CD8-positive, alpha-beta T cell (primary cell): ENCODE measurements at regions of chr6 and their contacts with region 1.

Region 1: GRCh38 chr6:33620856-33621710 is at the start of gene ITPR3:
- DNase-seq: peak; percentile 55 to 92 (median 72)
- ATAC-seq: peak; percentile 84
- H3K4me3 ChIP-seq: peak within 1 kb of the TSS; percentile 79 to 95
- H3K4me3 Mint-ChIP-seq: peak within 1 kb of the TSS; percentile 90
- H3K27ac ChIP-seq: peak within 1 kb of the TSS; percentile 78 to 86
- H3K27ac Mint-ChIP-seq: peak within 1 kb of the TSS; percentile 91
- H3K4me1 ChIP-seq: peaks cover 38% of the 10 kb centered on the region
- H3K4me1 Mint-ChIP-seq: peaks cover 66% of the 10 kb centered on the region
- H3K27me3 ChIP-seq: no peaks in the 10 kb centered on the region
- H3K27me3 Mint-ChIP-seq: no peaks in the 10 kb centered on the region
- CTCF ChIP-seq: no peak
- total RNA-seq, gene ITPR3: 39.5 to 40.1 TPM

Region 2: GRCh38 chr6:32853541-32854375 is 767.3 kb before region 1 on chr6 and contains the starts of genes PSMB9 and TAP1:
- CTCF ChIA-PET with region 1: no interaction called
- POLR2A ChIA-PET with region 1: no interaction called
- intact Hi-C with region 1: loop called in 1 of 2 experiments (anchors 5 kb)
- DNase-seq: peak; percentile 83 to 99 (median 94)
- ATAC-seq: peak; percentile 78
- H3K4me3 ChIP-seq: peak within 1 kb of the TSS; percentile 85 to 99
- H3K4me3 Mint-ChIP-seq: peak within 1 kb of the TSS; percentile 99
- H3K27ac ChIP-seq: peak within 1 kb of the TSS; percentile 98
- H3K27ac Mint-ChIP-seq: peak within 1 kb of the TSS; percentile 100
- H3K4me1 ChIP-seq: peaks cover 62% of the 10 kb centered on the region
- H3K4me1 Mint-ChIP-seq: peaks cover 69% of the 10 kb centered on the region
- H3K27me3 ChIP-seq: no peaks in the 10 kb centered on the region
- H3K27me3 Mint-ChIP-seq: no peaks in the 10 kb centered on the region
- CTCF ChIP-seq: peak; percentile 89
- total RNA-seq, gene PSMB9: 32.9 to 34.7 TPM
- total RNA-seq, gene TAP1: 98.0 to 98.1 TPM

Region 3: GRCh38 chr6:33192671-33193602 is 428.1 kb before region 1 on chr6:
- CTCF ChIA-PET with region 1: no interaction called
- POLR2A ChIA-PET with region 1: no interaction called
- intact Hi-C with region 1: no loop called
- DNase-seq: peak in 5 of 9 experiments; percentile 41 to 60 (median 49)
- ATAC-seq: peak; percentile 29
- H3K4me3 ChIP-seq: peak overlapping the region; percentile 39 to 77
- H3K4me3 Mint-ChIP-seq: peak overlapping the region; percentile 83
- H3K27ac ChIP-seq: no peak overlapping the region
- H3K27ac Mint-ChIP-seq: peak overlapping the region; percentile 55
- H3K4me1 ChIP-seq: peaks cover 22% of the 10 kb centered on the region
- H3K4me1 Mint-ChIP-seq: peaks cover 35% of the 10 kb centered on the region
- H3K27me3 ChIP-seq: peaks cover 4 to 14% of the 10 kb centered on the region in 2 experiments
- H3K27me3 Mint-ChIP-seq: peaks cover 17% of the 10 kb centered on the region
- CTCF ChIP-seq: no peak

Region 4: DNA sequence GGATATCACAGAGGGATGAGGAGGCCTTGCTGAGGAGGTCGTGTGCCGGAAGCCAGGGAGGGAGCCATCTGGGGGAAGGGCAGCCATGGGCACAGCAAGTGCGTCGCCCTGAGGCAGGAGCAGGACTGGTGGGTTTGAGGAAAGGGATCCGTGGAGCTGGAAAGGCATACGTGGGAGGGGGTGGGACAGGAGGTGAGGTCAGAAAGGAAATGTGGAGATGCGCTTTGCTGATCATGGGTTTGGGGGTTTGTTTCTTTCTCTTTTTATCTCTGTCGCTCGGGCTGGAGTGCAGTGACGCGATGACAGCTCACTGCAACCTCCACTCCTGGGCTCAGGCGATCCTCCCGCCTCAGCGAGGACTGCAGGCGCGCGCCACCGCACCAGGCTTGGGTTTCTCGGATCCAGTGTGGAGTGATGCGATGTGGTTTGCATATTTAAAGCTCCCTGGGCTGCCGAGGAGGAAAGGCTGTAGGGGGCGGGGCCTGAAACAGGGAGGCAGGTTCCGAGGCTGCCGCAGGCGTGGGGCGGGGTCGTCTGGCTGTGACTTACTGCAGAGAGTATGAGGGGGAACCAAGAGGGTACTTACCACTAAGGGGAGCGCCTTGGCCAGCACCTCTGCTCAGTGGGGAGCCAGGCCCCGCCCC is 28.6 kb before region 1 on chr6:
- CTCF ChIA-PET with region 1: interaction called, 5 read pairs
- POLR2A ChIA-PET with region 1: interaction called, 11 read pairs
- intact Hi-C with region 1: no loop called
- DNase-seq: peak in 8 of 9 experiments; percentile 29 to 71 (median 54)
- ATAC-seq: peak; percentile 64
- H3K4me3 ChIP-seq: peak overlapping the region; percentile 49 to 56
- H3K4me3 Mint-ChIP-seq: peak overlapping the region; percentile 81
- H3K27ac ChIP-seq: peak overlapping the region; percentile 43 to 46
- H3K27ac Mint-ChIP-seq: peak overlapping the region; percentile 88
- H3K4me1 ChIP-seq: peaks cover 13% of the 10 kb centered on the region
- H3K4me1 Mint-ChIP-seq: peaks cover 28% of the 10 kb centered on the region
- H3K27me3 ChIP-seq: no peaks in the 10 kb centered on the region
- H3K27me3 Mint-ChIP-seq: no peaks in the 10 kb centered on the region
- CTCF ChIP-seq: no peak

Region 5: DNA sequence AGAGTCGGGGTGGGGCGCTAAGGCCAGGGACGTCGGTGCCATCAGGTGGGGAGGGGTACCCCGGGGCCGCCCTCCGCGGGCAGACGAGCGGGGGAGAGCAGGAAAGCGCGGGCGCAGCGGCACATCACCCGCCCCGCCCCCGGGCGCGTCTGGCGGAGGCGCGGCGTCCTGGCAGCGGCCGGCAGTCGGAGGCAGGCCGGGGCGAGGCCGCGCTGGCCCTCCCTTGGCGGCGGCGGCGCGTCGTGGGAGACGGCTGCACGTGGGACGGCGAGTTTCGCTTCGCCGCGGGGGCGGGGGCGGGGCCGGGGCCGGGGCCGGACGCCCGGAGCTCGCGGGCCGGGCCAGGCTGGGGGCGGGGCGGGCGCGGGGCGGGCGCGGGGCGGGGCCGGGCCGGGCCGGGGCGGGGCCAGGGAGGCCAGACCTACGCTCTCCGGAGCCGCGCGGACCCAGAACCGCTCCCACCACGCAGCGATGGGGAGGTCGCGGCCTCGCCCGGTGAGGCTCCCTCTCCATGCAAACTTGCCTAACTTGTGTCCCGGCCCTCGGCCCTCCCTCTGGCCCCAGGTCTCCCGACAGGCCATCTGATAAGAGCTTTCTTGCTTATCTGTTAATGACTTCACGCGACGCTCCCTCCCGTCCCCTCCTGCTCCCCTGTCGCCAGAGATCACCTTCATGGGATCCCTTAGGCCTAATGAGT is 12.5 kb after region 1 on chr6:
- CTCF ChIA-PET with region 1: interaction called, 7 read pairs
- POLR2A ChIA-PET with region 1: interaction called, 5 read pairs
- intact Hi-C with region 1: loop called in 1 of 2 experiments (anchors 1 kb)
- DNase-seq: peak in 8 of 9 experiments; percentile 38 to 85 (median 53)
- ATAC-seq: peak; percentile 77
- H3K4me3 ChIP-seq: peak overlapping the region; percentile 48 to 54
- H3K4me3 Mint-ChIP-seq: peak overlapping the region; percentile 85
- H3K27ac ChIP-seq: peak overlapping the region in 1 of 2 experiments; percentile 19
- H3K27ac Mint-ChIP-seq: no peak overlapping the region
- H3K4me1 ChIP-seq: peaks cover 21% of the 10 kb centered on the region
- H3K4me1 Mint-ChIP-seq: peaks cover 55% of the 10 kb centered on the region
- H3K27me3 ChIP-seq: no peaks in the 10 kb centered on the region
- H3K27me3 Mint-ChIP-seq: no peaks in the 10 kb centered on the region
- CTCF ChIP-seq: no peak

Region 6: GRCh38 chr6:33700391-33701050 is 79.4 kb after region 1 on chr6:
- CTCF ChIA-PET with region 1: interaction called, 7 read pairs
- POLR2A ChIA-PET with region 1: interaction called, 18 read pairs
- intact Hi-C with region 1: no loop called
- DNase-seq: peak; percentile 46 to 84 (median 78)
- ATAC-seq: peak; percentile 71
- H3K4me3 ChIP-seq: no peak overlapping the region
- H3K4me3 Mint-ChIP-seq: no peak overlapping the region
- H3K27ac ChIP-seq: peak overlapping the region in 1 of 2 experiments; percentile 48
- H3K27ac Mint-ChIP-seq: peak overlapping the region; percentile 60
- H3K4me1 ChIP-seq: peaks cover 31% of the 10 kb centered on the region
- H3K4me1 Mint-ChIP-seq: peaks cover 35% of the 10 kb centered on the region
- H3K27me3 ChIP-seq: no peaks in the 10 kb centered on the region
- H3K27me3 Mint-ChIP-seq: no peaks in the 10 kb centered on the region
- CTCF ChIP-seq: peak; percentile 63